Right ventricle myocardium inferior (tissue), 1 donor: ENCODE measurements at regions of chr22 and their contacts with region 1.

Region 1: DNA sequence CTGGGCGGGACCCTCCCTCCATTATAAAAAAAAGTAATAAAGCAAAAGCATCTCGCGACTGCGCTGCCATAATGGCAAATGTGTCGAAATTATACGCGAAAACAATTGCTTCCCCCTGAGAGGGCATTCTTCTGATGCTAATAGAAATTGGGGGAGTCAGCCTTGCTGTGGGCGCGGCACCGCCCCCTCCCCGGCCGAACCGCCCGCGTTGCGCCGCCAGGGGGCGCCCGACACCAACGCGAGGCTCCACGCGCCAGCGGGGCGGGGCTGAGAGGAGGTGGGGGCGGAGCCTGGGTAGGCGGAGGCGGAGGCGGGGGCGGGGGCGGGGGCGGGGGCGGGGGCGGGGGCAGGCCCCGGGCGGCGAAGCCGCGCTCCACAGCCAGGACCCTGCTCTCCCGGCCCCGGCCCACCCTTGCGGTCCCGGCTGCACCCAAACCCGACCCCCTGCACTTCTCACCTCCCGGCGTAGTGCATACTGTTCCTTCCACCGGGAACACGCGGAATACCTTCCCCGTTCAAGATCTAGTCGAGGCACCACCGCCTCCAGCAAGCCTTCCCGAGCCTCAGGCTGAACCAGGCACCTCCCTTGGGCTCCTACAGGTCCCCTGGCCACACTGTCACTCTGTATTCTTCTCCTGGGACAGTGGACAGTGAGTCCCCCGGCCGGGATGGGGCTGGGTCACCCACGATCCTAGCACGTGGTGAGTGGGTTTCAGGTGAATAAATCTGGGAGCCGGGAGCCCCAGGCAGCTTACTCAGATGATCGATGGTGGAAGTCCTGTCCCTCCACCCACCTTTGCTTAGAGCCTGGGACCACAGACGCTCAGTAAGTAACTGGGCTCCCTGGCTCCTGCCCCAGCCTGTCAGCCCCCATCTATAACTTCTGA is 15.5 kb upstream of the UPK3A start:
- DNase-seq: peak; percentile 96
- ATAC-seq: peak; percentile 80

Region 2: DNA sequence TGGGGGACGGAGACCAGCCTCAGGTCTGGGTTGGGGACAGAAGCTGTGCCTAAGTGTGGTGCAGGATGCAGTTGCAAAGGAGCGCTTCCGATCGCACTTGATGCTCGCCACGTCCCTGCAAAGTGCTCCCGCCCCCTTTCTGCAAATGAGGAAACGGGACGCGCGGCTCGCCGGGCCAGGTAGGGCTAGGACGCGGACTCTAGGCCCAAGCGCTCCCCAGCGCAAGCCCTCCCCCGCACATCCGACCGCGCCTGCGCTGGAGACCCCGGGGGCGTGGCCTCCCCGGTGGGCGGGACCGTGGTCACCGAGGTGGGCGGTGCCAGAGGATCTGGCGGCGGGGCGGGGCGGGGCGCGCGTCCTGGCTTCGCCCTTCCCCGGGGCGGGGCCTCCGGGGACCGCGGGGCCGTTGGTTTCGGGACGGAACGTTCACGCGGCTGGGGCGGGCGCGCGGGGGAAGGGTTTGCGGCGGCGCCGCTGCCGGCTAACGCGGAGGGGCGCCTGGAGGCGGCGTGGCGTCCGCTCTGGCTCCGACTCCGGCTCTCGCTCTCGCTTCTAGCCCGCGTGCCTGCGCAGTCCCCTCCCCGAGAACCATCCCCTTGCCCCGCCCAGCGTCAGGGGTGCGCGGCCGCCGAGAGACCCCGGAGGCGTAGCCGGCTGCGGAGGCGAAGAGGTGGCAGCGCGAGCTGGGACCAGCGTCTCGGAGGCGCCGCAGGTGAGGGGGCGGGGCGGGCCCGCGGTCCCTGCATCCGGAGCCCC is 40.4 kb after region 1 on chr22 and contains the start of gene FAM118A:
- intact Hi-C with region 1: loop called (anchors 1 kb)
- DNase-seq: peak; percentile 96
- ATAC-seq: peak; percentile 95
- total RNA-seq, gene FAM118A: 18.7 TPM

Region 3: GRCh38 chr22:45320357-45320976 is 51.3 kb after region 1 on chr22:
- intact Hi-C with region 1: no loop called
- DNase-seq: no peak
- ATAC-seq: no peak

Region 4: DNA sequence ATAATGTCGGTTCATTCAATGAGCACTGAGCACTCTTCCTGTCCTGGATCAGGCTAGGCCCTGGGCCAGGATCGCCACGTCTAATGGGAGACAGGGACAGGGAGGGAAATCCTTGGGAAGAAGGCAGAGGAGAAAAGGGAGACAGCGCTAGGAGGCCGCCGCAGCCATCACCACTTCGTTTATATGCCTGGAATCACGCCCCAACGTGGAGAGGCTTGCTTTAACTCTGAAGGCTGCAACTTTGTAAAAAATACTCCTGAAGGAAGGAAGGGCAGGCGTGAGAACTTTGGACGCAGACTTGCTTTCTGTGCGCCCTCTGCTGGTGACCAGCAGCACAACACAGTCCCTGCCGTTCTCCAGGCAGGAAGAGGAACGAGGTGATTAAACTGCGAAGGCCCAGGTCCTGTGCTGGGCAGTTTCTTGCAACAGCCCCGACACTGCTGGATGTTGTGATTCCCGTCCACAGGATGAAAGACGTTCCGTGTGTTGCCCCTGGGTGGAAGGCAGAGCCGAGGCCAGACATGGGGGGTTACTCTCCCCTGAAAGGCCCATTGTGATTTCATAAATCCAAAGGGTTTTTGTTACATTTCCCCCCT is 166.4 kb after region 1 on chr22:
- intact Hi-C with region 1: loop called (anchors 1 kb)
- DNase-seq: peak; percentile 89
- ATAC-seq: peak; percentile 93